Endothelial cell of umbilical vein (primary cell): ENCODE measurements at regions of chr5 and their contacts with region 1.

Region 1: GRCh38 chr5:179795863-179796833 is 2.4 kb downstream of the LTC4S start:
- DNase-seq: peak; percentile 78
- H3K4me3 ChIP-seq: peak overlapping the region; percentile 14 to 57 (median 38)
- H3K27ac ChIP-seq: no peak overlapping the region
- H3K4me1 ChIP-seq: peaks cover 10% of the 10 kb centered on the region
- H3K27me3 ChIP-seq: no peaks in the 10 kb centered on the region
- CTCF ChIP-seq: peak; percentile 70 to 83
- POLR2A ChIP-seq: peak; percentile 61

Region 2: GRCh38 chr5:179732417-179732917 is 63.7 kb before region 1 on chr5 and contains the start of gene MAML1:
- CTCF ChIA-PET with region 1: interaction called, 11 read pairs
- POLR2A ChIA-PET with region 1: no interaction called
- dilution Hi-C with region 1: no loop called
- intact Hi-C with region 1: loop called (anchors 1 kb)
- DNase-seq: peak; percentile 100
- H3K4me3 ChIP-seq: peak within 1 kb of the TSS; percentile 64 to 92 (median 77)
- H3K27ac ChIP-seq: peak within 1 kb of the TSS; percentile 70
- H3K4me1 ChIP-seq: peaks cover 28% of the 10 kb centered on the region
- H3K27me3 ChIP-seq: no peaks in the 10 kb centered on the region
- CTCF ChIP-seq: no peak
- POLR2A ChIP-seq: peak; percentile 83
- total RNA-seq, gene MAML1: 29.0 and 30.1 TPM in 2 replicates

Region 3: GRCh38 chr5:179930788-179931473 is 134.8 kb after region 1 on chr5:
- CTCF ChIA-PET with region 1: no interaction called
- POLR2A ChIA-PET with region 1: no interaction called
- dilution Hi-C with region 1: no loop called
- intact Hi-C with region 1: no loop called
- DNase-seq: peak; percentile 11
- H3K4me3 ChIP-seq: no peak overlapping the region
- H3K27ac ChIP-seq: no peak overlapping the region
- H3K4me1 ChIP-seq: no peaks in the 10 kb centered on the region
- H3K27me3 ChIP-seq: no peaks in the 10 kb centered on the region
- CTCF ChIP-seq: no peak
- POLR2A ChIP-seq: no peak